ENCODE measurements at regions of chr16 and their contacts with region 1.

Region 1: GRCh38 chr16:4475880-4476788 is at the start of gene HMOX2:
- DNase-seq: peak; percentile 88 to 91
- ATAC-seq: peak; percentile 90 to 91
- H3K4me3 ChIP-seq: peak within 1 kb of the TSS; percentile 84 to 99 (median 89)
- H3K27ac ChIP-seq: peak within 1 kb of the TSS; percentile 85 to 96 (median 89)
- H3K4me1 ChIP-seq: peaks cover 11 to 22% of the 10 kb centered on the region in 2 donors
- H3K27me3 ChIP-seq: peaks cover 0 to 12% (median 12%) of the 10 kb centered on the region in 3 donors
- CTCF ChIP-seq: peak in 4 of 5 experiments; percentile 24 to 47 (median 36)
- POLR2A ChIP-seq: peak; percentile 84 to 88
- total RNA-seq, gene HMOX2: 21.7 to 30.0 (median 28.4) TPM

Region 2: DNA sequence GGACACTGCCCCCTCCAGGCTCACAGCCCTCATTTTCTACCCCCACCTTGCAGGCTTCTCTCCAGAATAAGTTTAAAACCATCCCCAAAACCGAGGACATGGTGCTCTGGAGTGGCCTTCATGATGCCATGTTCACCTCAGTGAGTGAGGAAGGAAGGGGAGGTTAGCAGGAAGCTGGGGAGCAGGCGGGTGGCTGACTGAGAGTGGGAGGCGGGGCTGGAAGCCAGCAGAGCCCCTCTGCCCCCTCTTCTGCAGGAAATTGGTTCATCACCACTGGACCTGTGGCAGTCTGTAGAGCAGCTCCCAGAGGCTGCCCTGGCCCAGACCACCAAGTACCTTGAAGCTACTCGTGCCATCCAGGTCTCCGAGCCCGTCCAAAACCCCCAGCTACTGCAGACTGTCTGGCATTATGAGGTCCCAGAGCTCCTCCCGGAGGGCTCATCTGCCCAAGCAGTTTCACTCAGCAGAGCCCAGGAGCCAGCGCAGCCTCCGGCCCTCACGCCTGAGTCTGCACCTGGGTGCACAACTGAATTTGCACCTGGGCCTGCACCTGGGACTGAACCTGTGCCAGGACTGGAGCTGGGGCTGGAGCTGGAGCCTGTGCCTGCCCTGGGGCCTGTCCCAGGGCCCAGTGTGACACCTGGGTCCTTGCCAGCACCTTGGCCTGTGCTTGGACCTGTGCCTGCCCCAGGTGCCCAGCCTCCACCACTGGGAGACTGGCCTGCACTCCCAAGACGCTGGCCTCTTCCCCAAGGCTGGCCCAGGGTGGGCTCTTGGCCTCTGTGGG is 99.0 kb after region 1 on chr16:
- in situ Hi-C with region 1: loop called in 1 of 4 experiments (anchors 25 kb)
- intact Hi-C with region 1: no loop called
- DNase-seq: no peak
- ATAC-seq: no peak
- H3K4me3 ChIP-seq: no peak overlapping the region
- H3K27ac ChIP-seq: no peak overlapping the region
- H3K4me1 ChIP-seq: peaks cover 0 to 5% of the 10 kb centered on the region in 2 donors
- H3K27me3 ChIP-seq: no peaks in the 10 kb centered on the region
- CTCF ChIP-seq: no peak
- POLR2A ChIP-seq: no peak

Region 3: DNA sequence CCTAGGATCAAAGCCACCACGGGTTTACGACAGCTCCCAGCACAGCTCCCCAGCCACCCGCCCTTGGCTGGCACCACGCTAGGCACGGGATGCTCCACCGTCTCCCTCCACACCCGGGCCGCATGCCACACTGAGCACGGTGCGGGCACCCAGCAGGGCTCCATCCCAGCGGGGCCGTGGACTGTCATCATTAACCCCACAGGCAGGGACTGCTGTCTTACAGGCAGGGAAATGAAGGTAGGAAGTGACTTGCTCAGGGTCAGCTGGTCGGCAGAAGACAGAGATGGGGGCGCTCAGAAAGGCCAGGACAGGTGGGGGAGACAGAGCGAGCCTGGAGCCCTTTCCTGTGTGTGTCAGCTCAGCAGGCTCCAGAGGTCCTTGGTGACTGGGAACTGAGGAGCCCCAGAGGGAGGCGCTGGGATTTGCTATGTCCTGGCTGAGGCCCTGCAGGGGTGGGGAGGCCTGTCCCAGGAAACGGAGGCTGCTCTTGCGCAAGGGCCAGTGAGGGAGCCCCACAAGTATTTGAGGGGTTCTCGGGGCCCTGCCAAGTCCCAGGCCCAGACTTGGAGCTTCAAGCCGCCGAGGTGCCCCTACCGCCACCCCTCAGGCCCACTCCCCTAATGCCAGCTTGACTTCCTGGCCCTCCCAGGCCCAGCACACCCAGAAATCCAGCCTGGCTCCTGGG is 135.3 kb after region 1 on chr16:
- in situ Hi-C with region 1: no loop called
- intact Hi-C with region 1: no loop called
- DNase-seq: no peak
- ATAC-seq: no peak
- H3K4me3 ChIP-seq: no peak overlapping the region
- H3K27ac ChIP-seq: no peak overlapping the region
- H3K4me1 ChIP-seq: peaks cover 33 to 44% of the 10 kb centered on the region in 2 donors
- H3K27me3 ChIP-seq: no peaks in the 10 kb centered on the region
- CTCF ChIP-seq: no peak
- POLR2A ChIP-seq: no peak